ENCODE measurements at regions of chr9 and their contacts with region 1.

Region 1: DNA sequence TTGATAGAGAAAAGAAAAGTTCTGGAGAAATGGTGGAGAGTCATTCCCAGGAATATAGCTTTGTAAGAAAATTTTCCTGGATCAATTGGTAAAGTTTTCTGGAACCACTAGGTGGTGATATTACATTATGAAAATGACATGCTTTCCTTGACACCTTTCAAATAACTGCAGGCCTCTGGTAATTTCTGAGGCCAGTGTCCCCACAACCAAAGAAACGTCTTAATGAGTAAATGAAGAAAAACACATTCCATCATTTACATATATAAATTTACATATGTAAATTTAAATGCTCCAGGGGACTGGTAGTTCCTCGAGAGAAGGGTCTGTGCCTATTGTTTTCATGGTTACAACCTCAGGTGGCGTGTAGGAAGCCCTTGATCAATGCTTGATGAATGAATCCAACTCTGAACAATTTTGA is 17.2 kb upstream of the RGS3 start:
- DNase-seq: peak in 4 of 14 experiments; percentile 19 to 63 (median 55)
- ATAC-seq: no peak
- H3K4me3 ChIP-seq: no peak overlapping the region
- H3K4me3 Mint-ChIP-seq: no peak overlapping the region
- H3K27ac ChIP-seq: no peak overlapping the region
- H3K27ac Mint-ChIP-seq: no peak overlapping the region
- H3K4me1 ChIP-seq: no peaks in the 10 kb centered on the region
- H3K4me1 Mint-ChIP-seq: no peaks in the 10 kb centered on the region
- H3K27me3 ChIP-seq: no peaks in the 10 kb centered on the region
- H3K27me3 Mint-ChIP-seq: no peaks in the 10 kb centered on the region
- CTCF ChIP-seq: peak; percentile 95

Region 2: GRCh38 chr9:113317777-113318176 is 128.6 kb before region 1 on chr9:
- CTCF ChIA-PET with region 1: no interaction called
- POLR2A ChIA-PET with region 1: no interaction called
- intact Hi-C with region 1: no loop called
- DNase-seq: no peak
- ATAC-seq: no peak
- H3K4me3 ChIP-seq: no peak overlapping the region
- H3K4me3 Mint-ChIP-seq: no peak overlapping the region
- H3K27ac ChIP-seq: no peak overlapping the region
- H3K27ac Mint-ChIP-seq: no peak overlapping the region
- H3K4me1 ChIP-seq: no peaks in the 10 kb centered on the region
- H3K4me1 Mint-ChIP-seq: no peaks in the 10 kb centered on the region
- H3K27me3 ChIP-seq: no peaks in the 10 kb centered on the region
- H3K27me3 Mint-ChIP-seq: no peaks in the 10 kb centered on the region
- CTCF ChIP-seq: no peak

Region 3: GRCh38 chr9:113591001-113591898 is 144.9 kb after region 1 on chr9:
- CTCF ChIA-PET with region 1: interaction called, 6 read pairs
- POLR2A ChIA-PET with region 1: interaction called, 3 read pairs
- intact Hi-C with region 1: loop called in 1 of 2 experiments (anchors 1 kb)
- DNase-seq: peak in 11 of 14 experiments; percentile 20 to 69 (median 40)
- ATAC-seq: no peak
- H3K4me3 ChIP-seq: no peak overlapping the region
- H3K4me3 Mint-ChIP-seq: no peak overlapping the region
- H3K27ac ChIP-seq: no peak overlapping the region
- H3K27ac Mint-ChIP-seq: no peak overlapping the region
- H3K4me1 ChIP-seq: peaks cover 42% of the 10 kb centered on the region
- H3K4me1 Mint-ChIP-seq: peaks cover 33% of the 10 kb centered on the region
- H3K27me3 ChIP-seq: no peaks in the 10 kb centered on the region
- H3K27me3 Mint-ChIP-seq: no peaks in the 10 kb centered on the region
- CTCF ChIP-seq: peak; percentile 59

Measured in CD4-positive, alpha-beta T cell (primary cell).